ENCODE measurements at regions of chr13 and their contacts with region 1.

Region 1: DNA sequence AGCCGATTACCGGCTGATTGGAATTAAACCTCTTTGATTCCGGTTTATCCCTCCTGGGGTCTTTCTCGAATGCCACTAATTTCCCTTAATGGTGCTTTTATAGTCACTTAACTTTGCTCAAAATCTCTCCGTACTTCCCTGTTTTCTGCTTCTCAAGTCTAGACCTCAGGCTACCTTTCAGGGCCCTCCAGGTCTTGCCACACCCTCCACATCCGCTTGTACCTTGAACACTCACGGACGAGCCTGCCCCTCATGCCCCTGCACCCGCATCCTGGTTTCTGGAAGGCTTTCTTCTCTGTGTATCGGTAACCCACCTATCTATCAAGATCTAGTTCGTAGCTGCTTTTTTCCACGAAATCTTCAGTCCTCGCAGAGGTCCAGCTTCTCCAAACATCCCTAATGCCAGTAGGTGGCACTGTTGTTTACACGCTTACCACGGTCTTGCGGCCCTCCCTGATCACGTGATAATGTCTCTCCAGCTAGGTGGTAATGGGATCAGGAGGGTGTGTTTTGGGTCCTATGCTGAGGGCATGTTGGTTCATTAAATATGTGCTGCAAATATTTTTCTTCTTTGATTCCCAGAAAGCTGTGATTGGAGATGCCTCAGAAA is 13.8 kb downstream of the ATP12A start:
- H3K4me3 ChIP-seq: no peak overlapping the region
- H3K27ac ChIP-seq: no peak overlapping the region
- H3K4me1 ChIP-seq: peaks cover 3% of the 10 kb centered on the region; the same call in 1 of the 2 replicates
- CTCF ChIP-seq: no peak

Region 2: GRCh38 chr13:24512197-24512907 is 181.6 kb before region 1 on chr13 and contains the start of gene PARP4:
- CTCF ChIA-PET with region 1: no interaction called
- POLR2A ChIA-PET with region 1: no interaction called
- H3K4me3 ChIP-seq: peak within 1 kb of the TSS; percentile 63
- H3K27ac ChIP-seq: peak within 1 kb of the TSS; percentile 68
- H3K4me1 ChIP-seq: no peaks in the 10 kb centered on the region; the same call in 1 of the 2 replicates
- CTCF ChIP-seq: peak; percentile 70

Region 3: GRCh38 chr13:24709186-24709913 is 15.4 kb after region 1 on chr13:
- CTCF ChIA-PET with region 1: interaction called, 40 read pairs
- POLR2A ChIA-PET with region 1: no interaction called
- H3K4me3 ChIP-seq: no peak overlapping the region
- H3K27ac ChIP-seq: no peak overlapping the region
- H3K4me1 ChIP-seq: 0 out of 2 replicates have a peak, but pooled peaks cover 3% of the 10 kb centered on the region
- CTCF ChIP-seq: no peak

Region 4: GRCh38 chr13:24727731-24728601 is 34.0 kb after region 1 on chr13:
- CTCF ChIA-PET with region 1: interaction called, 48 read pairs
- POLR2A ChIA-PET with region 1: no interaction called
- H3K4me3 ChIP-seq: no peak overlapping the region
- H3K27ac ChIP-seq: no peak overlapping the region
- H3K4me1 ChIP-seq: no peaks in the 10 kb centered on the region
- CTCF ChIP-seq: peak; percentile 81